Activated T-helper 1 cell treated with anti-CD3 and anti-CD28 coated beads, Interleukin-12 subunit alpha, Interleukin-12 subunit beta, Interleukin-2, Interleukin-4 antibody, amounts not matched to agents 30 ng/mL and 10 ng/mL and 1 ng/mL, durations not matched to agents 14 hours and 24 hours and 36 hours (primary cell): ENCODE measurements at regions of chr7 and their contacts with region 1.

Region 1: GRCh38 chr7:152336754-152337368 is 98.9 kb downstream of the KMT2C start:
- DNase-seq: peak; percentile 2
- H3K4me3 Mint-ChIP-seq: peak overlapping the region; percentile 53
- H3K27ac Mint-ChIP-seq: no peak overlapping the region
- H3K4me1 Mint-ChIP-seq: peaks cover 23% of the 10 kb centered on the region
- H3K27me3 Mint-ChIP-seq: no peaks in the 10 kb centered on the region

Region 2: GRCh38 chr7:152120210-152120609 is 216.7 kb before region 1 on chr7:
- intact Hi-C with region 1: no loop called
- DNase-seq: no peak
- H3K4me3 Mint-ChIP-seq: no peak overlapping the region
- H3K27ac Mint-ChIP-seq: no peak overlapping the region
- H3K4me1 Mint-ChIP-seq: no peaks in the 10 kb centered on the region
- H3K27me3 Mint-ChIP-seq: no peaks in the 10 kb centered on the region

Region 3: DNA sequence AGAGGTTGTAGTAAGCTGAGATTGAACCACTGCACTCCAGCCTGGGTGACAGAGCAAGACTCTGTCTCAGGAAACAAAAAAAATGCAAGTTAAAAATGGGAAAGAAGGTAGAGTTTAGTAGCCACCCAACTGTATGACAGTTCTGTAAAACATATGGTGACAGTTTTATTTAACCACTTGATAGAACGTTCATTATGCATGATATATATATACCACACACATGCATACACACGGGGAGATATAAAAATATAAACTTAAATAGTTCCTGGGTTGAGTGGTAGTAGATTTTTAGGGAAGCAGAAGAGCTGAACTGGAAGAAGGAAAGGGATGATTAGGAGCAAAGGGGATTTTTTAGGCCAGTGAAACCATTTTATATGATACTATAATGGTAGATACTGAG is 21.0 kb before region 1 on chr7:
- intact Hi-C with region 1: loop called (anchors 2 kb)
- DNase-seq: no peak
- H3K4me3 Mint-ChIP-seq: no peak overlapping the region
- H3K27ac Mint-ChIP-seq: no peak overlapping the region
- H3K4me1 Mint-ChIP-seq: peaks cover 13% of the 10 kb centered on the region
- H3K27me3 Mint-ChIP-seq: no peaks in the 10 kb centered on the region

Region 4: DNA sequence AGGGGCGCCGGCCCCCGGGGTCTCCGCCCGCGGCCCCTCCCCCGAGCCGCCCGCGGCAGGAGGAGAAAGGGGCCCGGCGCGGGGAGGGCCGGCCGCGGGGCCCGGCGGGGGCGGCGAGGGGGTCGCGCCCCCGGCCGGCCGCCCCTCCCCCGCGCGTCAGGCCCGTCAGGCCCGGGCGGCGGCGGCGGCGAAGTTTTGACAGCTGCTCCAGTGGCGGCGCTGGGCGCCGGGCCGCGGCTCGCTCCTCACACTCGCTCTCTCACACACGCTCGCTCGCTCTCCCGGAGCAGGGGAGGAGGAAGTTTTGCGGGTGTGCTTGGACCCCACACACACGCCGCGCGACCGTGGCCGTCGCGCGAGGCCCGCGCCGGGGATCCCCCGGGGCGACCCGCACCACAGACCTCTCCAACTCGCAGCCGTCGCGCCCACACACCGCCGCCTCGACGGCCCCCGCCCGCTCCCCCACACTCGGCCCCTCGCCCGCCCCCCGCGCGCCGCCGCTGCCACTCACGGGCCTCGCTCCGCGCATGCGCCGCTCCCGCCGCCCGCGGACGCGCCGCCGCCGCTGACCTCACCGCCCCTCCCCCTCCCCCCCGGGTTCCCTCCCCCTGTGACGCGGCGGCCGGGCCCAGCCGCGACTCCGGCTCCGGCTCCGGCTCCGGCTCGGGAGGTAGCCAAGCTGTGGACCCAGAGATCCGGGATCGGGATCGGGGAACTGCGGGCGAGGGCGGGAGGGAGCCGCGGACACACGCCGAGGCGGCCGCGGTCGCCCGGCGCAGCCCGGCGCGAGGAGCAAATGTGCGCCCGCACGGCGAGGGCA is 99.5 kb after region 1 on chr7:
- intact Hi-C with region 1: loop called (anchors 2 kb)
- DNase-seq: peak; percentile 82
- H3K4me3 Mint-ChIP-seq: peak overlapping the region; percentile 76
- H3K27ac Mint-ChIP-seq: peak overlapping the region; percentile 72
- H3K4me1 Mint-ChIP-seq: peaks cover 26% of the 10 kb centered on the region
- H3K27me3 Mint-ChIP-seq: peaks cover 1% of the 10 kb centered on the region

Region 5: GRCh38 chr7:152709287-152710152 is 372.7 kb after region 1 on chr7:
- intact Hi-C with region 1: loop called (anchors 2 kb)
- DNase-seq: no peak
- H3K4me3 Mint-ChIP-seq: no peak overlapping the region
- H3K27ac Mint-ChIP-seq: no peak overlapping the region
- H3K4me1 Mint-ChIP-seq: peaks cover 4% of the 10 kb centered on the region
- H3K27me3 Mint-ChIP-seq: peaks cover 5% of the 10 kb centered on the region